Vagina (tissue), 2 donors: ENCODE measurements at regions of chr9 and their contacts with region 1.

Region 1: GRCh38 chr9:23826120-23826629 is at the start of gene ELAVL2:
- DNase-seq: no peak
- H3K4me3 ChIP-seq: peak within 1 kb of the TSS; percentile 28 to 36
- H3K27ac ChIP-seq: no peak within 1 kb of the TSS
- H3K4me1 ChIP-seq: peaks cover 22% of the 10 kb centered on the region
- H3K27me3 ChIP-seq: peaks cover 13% of the 10 kb centered on the region
- CTCF ChIP-seq: no peak
- POLR2A ChIP-seq: no peak
- total RNA-seq, gene ELAVL2: 2.2 TPM

Region 2: DNA sequence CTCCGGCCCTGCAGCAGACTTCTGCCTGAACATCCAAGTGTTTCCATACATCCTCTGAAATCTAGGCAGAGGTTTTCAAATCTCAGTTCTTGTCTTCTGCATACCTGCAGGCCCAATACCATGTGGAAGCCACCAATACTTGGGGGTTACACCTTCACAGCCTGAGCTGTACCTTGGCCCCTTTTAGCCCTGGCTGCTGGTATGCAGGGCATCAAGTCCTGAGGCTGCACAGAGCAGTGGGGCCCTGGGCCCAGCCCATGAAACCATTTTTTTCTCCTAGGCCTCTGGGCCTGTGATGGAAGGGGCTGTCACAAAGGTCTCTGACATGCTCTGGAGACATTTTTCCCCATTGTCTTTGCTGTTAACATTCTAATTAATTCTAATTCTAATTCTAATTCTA is 680.7 kb before region 1 on chr9:
- intact Hi-C with region 1: no loop called
- DNase-seq: no peak
- H3K4me3 ChIP-seq: no peak overlapping the region
- H3K27ac ChIP-seq: no peak overlapping the region
- H3K4me1 ChIP-seq: no peaks in the 10 kb centered on the region
- H3K27me3 ChIP-seq: no peaks in the 10 kb centered on the region
- CTCF ChIP-seq: no peak
- POLR2A ChIP-seq: no peak

Region 3: DNA sequence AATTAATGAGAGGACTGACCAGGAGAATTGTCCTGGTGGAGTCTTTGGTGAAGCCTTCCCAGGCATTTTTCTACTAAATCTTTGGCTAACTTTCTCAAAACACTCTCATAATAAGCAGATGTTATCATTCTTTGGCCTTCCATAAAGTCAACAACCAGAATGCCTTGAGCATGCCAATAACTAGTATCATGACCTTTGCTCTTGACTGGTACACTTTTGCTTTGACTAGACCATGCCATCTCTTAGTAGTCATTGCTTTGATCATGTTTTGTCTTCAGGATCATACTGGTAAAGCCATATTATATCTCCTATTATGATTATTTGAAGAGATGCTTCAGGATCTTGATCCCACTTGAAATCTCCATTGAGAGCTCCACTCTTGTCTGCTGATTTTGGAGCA is 507.1 kb before region 1 on chr9:
- intact Hi-C with region 1: loop called (anchors 5 kb)
- DNase-seq: no peak
- H3K4me3 ChIP-seq: no peak overlapping the region
- H3K27ac ChIP-seq: no peak overlapping the region
- H3K4me1 ChIP-seq: no peaks in the 10 kb centered on the region
- H3K27me3 ChIP-seq: no peaks in the 10 kb centered on the region
- CTCF ChIP-seq: no peak
- POLR2A ChIP-seq: no peak